ENCODE measurements at regions of chr14 and their contacts with region 1.

Region 1: DNA sequence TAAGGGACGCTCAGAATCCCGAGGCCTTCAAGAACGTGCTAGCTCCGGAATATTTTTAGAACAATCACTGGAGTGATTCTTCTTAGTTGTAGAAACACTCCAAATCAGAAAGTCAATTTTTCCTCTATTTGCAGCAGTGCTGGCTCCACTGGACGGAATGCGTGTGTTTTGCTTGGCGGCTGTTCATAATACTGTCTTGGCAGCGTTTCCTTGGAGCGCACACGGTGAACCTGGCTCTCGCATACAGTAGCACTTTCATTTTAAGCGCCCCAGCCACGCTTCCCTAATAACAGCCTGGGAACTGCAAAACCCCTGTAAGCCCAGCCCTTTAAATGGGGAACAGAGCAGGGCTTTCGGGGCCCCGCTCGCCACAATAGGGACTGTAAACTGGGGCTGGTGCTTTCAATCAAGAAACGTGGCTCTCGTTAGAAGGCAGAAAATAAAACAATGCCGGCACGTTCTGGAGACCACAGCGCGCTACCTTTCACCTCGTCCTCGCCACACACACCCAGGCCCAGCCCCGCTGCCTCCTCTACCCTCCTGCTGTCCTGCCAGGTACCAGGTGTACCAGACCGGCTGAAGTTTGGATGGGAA is 79.9 kb downstream of the BCL11B start:
- DNase-seq: peak in 6 of 10 donors; percentile 41 to 74 (median 52)
- H3K4me3 ChIP-seq: peak overlapping the region; percentile 14 to 70 (median 49)
- H3K27ac ChIP-seq: peak overlapping the region in 47 of 59 donors; percentile 1 to 90 (median 69)
- H3K27me3 ChIP-seq: peaks cover 0 to 4% (median 0%) of the 10 kb centered on the region in 45 donors
- CTCF ChIP-seq: no peak

Region 2: GRCh38 chr14:97978341-97978740 is 1213.8 kb before region 1 on chr14:
- intact Hi-C with region 1: loop called in 1 of 2 experiments (anchors 10 kb)
- DNase-seq: peak; percentile 68 to 89 (median 86)
- H3K4me3 ChIP-seq: peak overlapping the region in 58 of 59 donors; percentile 6 to 70 (median 46)
- H3K27ac ChIP-seq: peak overlapping the region in 45 of 59 donors; percentile 3 to 81 (median 64)
- H3K27me3 ChIP-seq: peaks cover 0 to 4% (median 0%) of the 10 kb centered on the region in 45 donors
- CTCF ChIP-seq: peak in 53 of 56 donors; percentile 15 to 71 (median 48)

Measured in dorsolateral prefrontal cortex (tissue), 120 donors.